Caco-2 (cell line): ENCODE measurements at regions of chr2 and their contacts with region 1.

Region 1: GRCh38 chr2:68935471-68935870 is 17.2 kb downstream of the GKN2 start:
- DNase-seq: no peak
- H3K4me3 ChIP-seq: no peak overlapping the region
- H3K4me3 Mint-ChIP-seq: no peak overlapping the region
- H3K27ac Mint-ChIP-seq: no peak overlapping the region
- H3K4me1 ChIP-seq: no peaks in the 10 kb centered on the region
- H3K4me1 Mint-ChIP-seq: no peaks in the 10 kb centered on the region
- H3K27me3 ChIP-seq: no peaks in the 10 kb centered on the region
- H3K27me3 Mint-ChIP-seq: peaks cover 7% of the 10 kb centered on the region
- CTCF ChIP-seq: no peak

Region 2: DNA sequence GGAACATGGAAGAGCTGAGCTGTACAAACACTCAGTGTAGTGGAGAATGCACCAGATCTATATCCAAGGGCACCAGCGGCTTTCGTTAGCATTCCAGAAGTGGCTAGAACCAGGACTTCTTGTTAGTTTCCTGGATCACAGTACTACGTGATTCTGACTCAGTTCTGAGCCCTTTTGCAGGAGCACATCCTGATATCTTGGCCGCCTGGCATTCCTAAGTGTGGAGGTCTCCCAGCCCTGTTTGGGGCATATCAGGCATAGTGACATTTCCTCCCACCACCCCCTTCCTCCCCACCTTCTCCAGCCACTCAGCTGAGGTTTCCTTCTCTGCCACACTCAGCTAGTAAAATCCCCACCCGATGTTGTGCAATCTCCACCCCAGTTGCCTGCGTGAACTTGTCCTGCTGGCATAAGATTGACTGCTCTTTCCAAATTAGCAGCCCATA is 127.6 kb before region 1 on chr2:
- CTCF ChIA-PET with region 1: no interaction called
- POLR2A ChIA-PET with region 1: interaction called, 17 read pairs
- intact Hi-C with region 1: no loop called
- DNase-seq: no peak
- H3K4me3 ChIP-seq: no peak overlapping the region
- H3K4me3 Mint-ChIP-seq: no peak overlapping the region
- H3K27ac Mint-ChIP-seq: no peak overlapping the region
- H3K4me1 ChIP-seq: no peaks in the 10 kb centered on the region
- H3K4me1 Mint-ChIP-seq: no peaks in the 10 kb centered on the region
- H3K27me3 ChIP-seq: no peaks in the 10 kb centered on the region; the same call in 1 of the 2 replicates
- H3K27me3 Mint-ChIP-seq: peaks cover 9% of the 10 kb centered on the region
- CTCF ChIP-seq: no peak

Region 3: DNA sequence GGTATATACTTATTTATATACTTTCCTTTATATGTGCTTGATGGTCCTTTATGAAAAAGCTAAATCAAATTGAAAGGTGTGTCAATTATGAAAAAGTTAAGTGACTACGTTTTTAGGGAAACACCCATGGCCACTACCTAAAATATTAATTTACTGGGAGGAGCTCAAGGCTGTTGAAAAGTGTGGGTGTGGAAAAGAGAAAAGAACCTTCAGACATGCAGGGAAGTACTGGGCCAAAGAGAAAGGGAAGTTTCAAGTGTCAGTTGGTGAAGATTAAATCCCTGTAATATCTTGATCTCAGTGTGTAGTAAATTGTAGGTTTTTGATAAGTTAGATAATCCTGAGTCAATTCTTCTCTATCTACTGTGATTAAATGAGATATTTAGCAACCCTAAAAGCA is 32.8 kb after region 1 on chr2:
- CTCF ChIA-PET with region 1: no interaction called
- POLR2A ChIA-PET with region 1: no interaction called
- intact Hi-C with region 1: no loop called
- DNase-seq: no peak
- H3K4me3 ChIP-seq: no peak overlapping the region
- H3K4me3 Mint-ChIP-seq: no peak overlapping the region
- H3K27ac Mint-ChIP-seq: no peak overlapping the region
- H3K4me1 ChIP-seq: 0 out of 2 replicates have a peak, but pooled peaks cover 3% of the 10 kb centered on the region
- H3K4me1 Mint-ChIP-seq: peaks cover 7% of the 10 kb centered on the region
- H3K27me3 ChIP-seq: no peaks in the 10 kb centered on the region
- H3K27me3 Mint-ChIP-seq: peaks cover 19% of the 10 kb centered on the region
- CTCF ChIP-seq: no peak